CD8-positive, alpha-beta T cell (primary cell): ENCODE measurements at regions of chr17 and their contacts with region 1.

Region 1: GRCh38 chr17:7306911-7307686 is at the start of gene EIF5A:
- DNase-seq: peak; percentile 100
- ATAC-seq: peak; percentile 67
- H3K4me3 ChIP-seq: peak within 1 kb of the TSS; percentile 66 to 92
- H3K4me3 Mint-ChIP-seq: peak within 1 kb of the TSS; percentile 98
- H3K27ac ChIP-seq: peak within 1 kb of the TSS; percentile 91 to 94
- H3K27ac Mint-ChIP-seq: peak within 1 kb of the TSS; percentile 99
- H3K4me1 ChIP-seq: peaks cover 25% of the 10 kb centered on the region
- H3K4me1 Mint-ChIP-seq: peaks cover 40% of the 10 kb centered on the region
- H3K27me3 ChIP-seq: no peaks in the 10 kb centered on the region
- H3K27me3 Mint-ChIP-seq: no peaks in the 10 kb centered on the region
- CTCF ChIP-seq: no peak
- total RNA-seq, gene EIF5A: 581 to 613 TPM

Region 2: GRCh38 chr17:7204828-7205461 is 102.2 kb before region 1 on chr17:
- CTCF ChIA-PET with region 1: no interaction called
- POLR2A ChIA-PET with region 1: interaction called, 3 read pairs
- intact Hi-C with region 1: loop called in 1 of 2 experiments (anchors 1 kb)
- DNase-seq: peak; percentile 87 to 100 (median 96)
- ATAC-seq: peak; percentile 84
- H3K4me3 ChIP-seq: peak overlapping the region; percentile 55 to 73
- H3K4me3 Mint-ChIP-seq: peak overlapping the region; percentile 87
- H3K27ac ChIP-seq: peak overlapping the region; percentile 90
- H3K27ac Mint-ChIP-seq: peak overlapping the region; percentile 91
- H3K4me1 ChIP-seq: peaks cover 20% of the 10 kb centered on the region
- H3K4me1 Mint-ChIP-seq: peaks cover 29% of the 10 kb centered on the region
- H3K27me3 ChIP-seq: no peaks in the 10 kb centered on the region
- H3K27me3 Mint-ChIP-seq: no peaks in the 10 kb centered on the region
- CTCF ChIP-seq: no peak

Region 3: DNA sequence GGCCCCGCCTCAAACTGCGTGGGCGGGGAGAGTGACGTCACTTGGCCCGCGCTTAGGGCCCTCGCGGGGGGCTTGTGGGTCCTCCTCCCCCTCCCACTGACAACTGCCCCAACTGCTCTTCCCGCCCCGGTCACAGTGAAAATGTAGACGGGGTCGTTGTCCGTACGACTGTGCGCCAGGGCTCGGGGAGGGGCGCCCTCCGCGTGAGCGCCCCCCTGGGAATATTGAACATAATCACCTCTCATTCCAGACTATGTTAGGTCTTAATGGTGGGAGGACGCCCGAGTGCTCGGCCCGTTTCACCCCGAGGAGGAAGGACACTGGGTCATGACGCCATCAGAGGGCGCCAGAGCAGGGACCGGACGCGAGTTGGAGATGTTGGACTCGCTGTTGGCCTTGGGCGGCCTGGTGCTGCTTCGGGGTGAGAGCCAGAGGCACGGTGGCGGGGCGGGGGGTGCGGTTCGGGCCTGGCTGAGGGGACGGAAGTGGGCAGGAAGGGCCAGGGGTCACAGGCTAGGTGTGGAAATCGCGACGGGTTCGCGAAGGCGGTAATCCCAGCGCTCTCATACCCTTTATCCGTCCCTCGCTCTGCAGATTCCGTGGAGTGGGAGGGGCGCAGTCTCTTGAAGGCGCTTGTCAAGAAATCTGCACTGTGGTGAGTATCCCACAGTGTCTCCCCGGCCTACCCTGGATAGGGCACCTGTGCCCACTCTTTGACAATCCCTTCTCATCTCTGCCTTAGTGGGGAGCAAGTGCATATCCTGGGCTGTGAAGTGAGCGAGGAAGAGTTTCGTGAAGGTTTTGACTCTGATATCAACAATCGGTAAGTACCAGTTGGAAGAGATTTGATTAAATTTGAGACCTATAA is 54.7 kb before region 1 on chr17 and contains the start of gene ELP5:
- CTCF ChIA-PET with region 1: no interaction called
- POLR2A ChIA-PET with region 1: no interaction called
- intact Hi-C with region 1: loop called (anchors 1 kb)
- DNase-seq: peak; percentile 73 to 99 (median 87)
- ATAC-seq: peak; percentile 48
- H3K4me3 ChIP-seq: peak within 1 kb of the TSS; percentile 81 to 92
- H3K4me3 Mint-ChIP-seq: peak within 1 kb of the TSS; percentile 97
- H3K27ac ChIP-seq: peak within 1 kb of the TSS; percentile 99
- H3K27ac Mint-ChIP-seq: peak within 1 kb of the TSS; percentile 100
- H3K4me1 ChIP-seq: peaks cover 31% of the 10 kb centered on the region
- H3K4me1 Mint-ChIP-seq: peaks cover 44% of the 10 kb centered on the region
- H3K27me3 ChIP-seq: no peaks in the 10 kb centered on the region
- H3K27me3 Mint-ChIP-seq: no peaks in the 10 kb centered on the region
- CTCF ChIP-seq: no peak
- total RNA-seq, gene ELP5: 38.9 to 39.0 TPM

Region 4: DNA sequence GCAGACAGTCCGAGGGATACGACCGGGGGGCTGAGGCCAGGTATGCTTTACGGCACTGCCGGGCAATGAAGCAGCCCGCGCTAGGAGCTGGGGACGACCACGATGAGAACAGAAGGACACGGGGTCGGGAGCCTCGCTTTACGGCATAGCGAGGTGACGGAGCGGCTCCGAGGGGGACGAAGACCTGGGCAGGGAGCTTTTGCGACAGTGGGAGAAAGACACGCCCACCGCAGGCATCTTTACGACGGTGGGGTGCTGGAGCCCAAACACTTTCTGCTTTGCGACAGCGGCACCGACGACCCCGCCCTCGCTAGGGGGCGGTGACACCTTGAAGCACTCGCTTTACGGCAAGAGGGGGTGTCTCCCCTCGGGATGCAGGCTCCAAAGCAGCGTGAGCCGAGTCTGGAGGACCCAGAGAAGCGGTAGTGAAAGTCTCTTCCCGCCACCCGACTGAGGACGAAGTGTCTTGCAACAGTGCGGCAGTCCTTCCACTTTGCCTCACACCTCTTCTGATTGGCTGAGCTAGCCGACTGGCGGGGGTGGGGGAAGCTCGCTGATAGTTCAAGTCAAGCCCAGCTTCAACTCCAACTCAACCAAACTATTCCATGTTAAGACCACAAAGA is 22.4 kb after region 1 on chr17:
- CTCF ChIA-PET with region 1: interaction called, 4 read pairs
- POLR2A ChIA-PET with region 1: interaction called, 20 read pairs
- intact Hi-C with region 1: loop called (anchors 1 kb)
- DNase-seq: peak; percentile 92 to 99 (median 96)
- ATAC-seq: peak; percentile 79
- H3K4me3 ChIP-seq: peak overlapping the region; percentile 96 to 100
- H3K4me3 Mint-ChIP-seq: peak overlapping the region; percentile 98
- H3K27ac ChIP-seq: peak overlapping the region; percentile 80 to 95
- H3K27ac Mint-ChIP-seq: peak overlapping the region; percentile 96
- H3K4me1 ChIP-seq: peaks cover 36% of the 10 kb centered on the region
- H3K4me1 Mint-ChIP-seq: peaks cover 37% of the 10 kb centered on the region
- H3K27me3 ChIP-seq: no peaks in the 10 kb centered on the region
- H3K27me3 Mint-ChIP-seq: no peaks in the 10 kb centered on the region
- CTCF ChIP-seq: no peak

Region 5: GRCh38 chr17:7561028-7561575 is 254.0 kb after region 1 on chr17:
- CTCF ChIA-PET with region 1: no interaction called
- POLR2A ChIA-PET with region 1: no interaction called
- intact Hi-C with region 1: loop called in 1 of 2 experiments (anchors 1 kb)
- DNase-seq: peak; percentile 67 to 89 (median 81)
- ATAC-seq: peak; percentile 68
- H3K4me3 ChIP-seq: peak overlapping the region; percentile 50 to 95
- H3K4me3 Mint-ChIP-seq: peak overlapping the region; percentile 94
- H3K27ac ChIP-seq: peak overlapping the region; percentile 91 to 97
- H3K27ac Mint-ChIP-seq: peak overlapping the region; percentile 99
- H3K4me1 ChIP-seq: peaks cover 49% of the 10 kb centered on the region
- H3K4me1 Mint-ChIP-seq: peaks cover 50% of the 10 kb centered on the region
- H3K27me3 ChIP-seq: no peaks in the 10 kb centered on the region
- H3K27me3 Mint-ChIP-seq: no peaks in the 10 kb centered on the region
- CTCF ChIP-seq: peak; percentile 85

Region 6: DNA sequence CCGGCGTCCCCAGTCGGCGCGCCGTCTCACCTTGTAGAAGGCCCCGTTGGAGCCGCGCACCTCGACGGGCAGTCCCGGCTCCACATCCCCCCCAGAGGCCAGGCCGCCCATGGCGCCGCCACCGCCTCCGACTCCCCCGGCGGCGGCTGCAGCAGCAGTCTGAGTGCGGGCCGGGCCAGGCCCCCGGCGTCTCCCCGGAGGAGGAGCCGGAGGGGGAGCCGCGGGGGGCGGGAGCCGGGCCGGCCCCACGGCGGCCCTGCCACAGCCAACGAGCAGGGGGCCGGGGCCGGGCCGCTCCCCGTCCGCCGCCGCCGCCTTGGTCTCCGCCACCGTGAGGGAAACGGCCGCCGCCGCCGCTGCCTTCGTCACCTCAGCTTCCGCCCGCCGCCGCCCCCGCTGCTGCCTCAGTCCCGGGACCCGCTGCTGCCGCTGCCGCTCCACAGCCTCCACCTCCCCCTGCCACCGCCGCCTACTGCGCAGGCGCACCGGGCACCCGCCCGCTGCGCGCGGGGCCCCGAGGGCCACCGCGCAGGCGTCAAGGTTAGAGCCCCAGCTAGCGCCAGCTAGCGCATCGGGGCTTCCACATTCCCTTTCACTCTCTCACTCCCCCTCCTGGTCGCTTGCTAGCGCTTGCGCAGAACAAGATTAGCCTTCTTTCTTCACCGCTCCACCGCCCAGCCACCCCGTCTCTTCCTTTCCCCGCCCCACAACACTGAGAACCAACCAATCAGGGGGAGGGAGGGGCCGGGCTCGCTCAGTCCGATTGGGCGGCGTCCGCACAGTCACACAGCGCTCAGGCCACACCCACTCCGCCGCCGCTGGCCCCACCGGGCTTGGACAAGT is 307.5 kb after region 1 on chr17 and contains the start of gene FXR2:
- CTCF ChIA-PET with region 1: no interaction called
- POLR2A ChIA-PET with region 1: no interaction called
- intact Hi-C with region 1: loop called in 1 of 2 experiments (anchors 1 kb)
- DNase-seq: peak; percentile 96 to 100 (median 98)
- ATAC-seq: peak; percentile 87
- H3K4me3 ChIP-seq: peak within 1 kb of the TSS; percentile 78 to 86
- H3K4me3 Mint-ChIP-seq: peak within 1 kb of the TSS; percentile 89
- H3K27ac ChIP-seq: peak within 1 kb of the TSS; percentile 70 to 89
- H3K27ac Mint-ChIP-seq: peak within 1 kb of the TSS; percentile 96
- H3K4me1 ChIP-seq: peaks cover 30% of the 10 kb centered on the region
- H3K4me1 Mint-ChIP-seq: peaks cover 38% of the 10 kb centered on the region
- H3K27me3 ChIP-seq: no peaks in the 10 kb centered on the region
- H3K27me3 Mint-ChIP-seq: no peaks in the 10 kb centered on the region
- CTCF ChIP-seq: peak; percentile 39
- total RNA-seq, gene FXR2: 18.8 to 21.7 TPM

Region 7: DNA sequence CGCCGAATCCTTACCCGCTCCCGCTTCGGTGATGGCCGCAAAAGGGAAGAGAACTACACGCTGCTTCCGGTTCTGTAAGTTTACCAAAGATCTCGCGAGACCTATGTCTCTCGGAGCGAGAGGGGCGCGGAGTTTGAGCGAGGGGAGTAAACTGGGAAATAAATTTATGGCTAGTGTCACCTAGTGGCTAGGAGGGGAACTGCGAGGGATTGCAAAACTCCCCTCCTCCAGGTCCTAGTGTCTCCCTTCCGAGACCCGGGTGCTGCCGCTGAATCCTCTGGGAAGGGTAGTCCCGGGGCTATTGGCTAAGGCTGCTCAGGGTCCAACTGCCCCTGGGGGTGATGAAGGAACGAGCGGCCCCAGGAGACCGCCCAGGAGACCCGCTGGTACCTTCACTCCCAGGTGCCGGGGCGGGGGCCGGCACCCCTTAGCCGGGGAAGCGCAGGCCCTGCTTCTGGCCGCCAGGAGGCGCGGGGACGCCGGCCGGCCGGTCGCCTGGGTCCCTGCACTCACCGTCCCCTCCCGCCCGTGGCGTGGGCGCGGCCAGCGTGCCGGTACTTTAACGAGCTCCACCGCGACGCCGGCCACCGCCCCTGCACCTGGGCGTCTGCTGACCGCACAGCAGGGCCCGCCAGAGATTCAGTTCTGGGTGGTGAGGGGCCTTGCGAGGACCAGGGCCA is 1076.2 kb after region 1 on chr17 and contains the start of gene RPL26:
- CTCF ChIA-PET with region 1: no interaction called
- POLR2A ChIA-PET with region 1: no interaction called
- intact Hi-C with region 1: loop called in 1 of 2 experiments (anchors 5 kb)
- DNase-seq: peak; percentile 88 to 98 (median 95)
- ATAC-seq: peak; percentile 89
- H3K4me3 ChIP-seq: peak within 1 kb of the TSS; percentile 70 to 72
- H3K4me3 Mint-ChIP-seq: peak within 1 kb of the TSS; percentile 96
- H3K27ac ChIP-seq: peak within 1 kb of the TSS; percentile 71 to 76
- H3K27ac Mint-ChIP-seq: peak within 1 kb of the TSS; percentile 93
- H3K4me1 ChIP-seq: peaks cover 40% of the 10 kb centered on the region
- H3K4me1 Mint-ChIP-seq: peaks cover 69% of the 10 kb centered on the region
- H3K27me3 ChIP-seq: no peaks in the 10 kb centered on the region
- H3K27me3 Mint-ChIP-seq: no peaks in the 10 kb centered on the region
- CTCF ChIP-seq: peak; percentile 100
- total RNA-seq, gene RPL26: 2,888 to 2,889 TPM